CD4-positive, alpha-beta memory T cell (primary cell): ENCODE measurements at regions of chr1 and their contacts with region 1.

Region 1: GRCh38 chr1:212791676-212792395 is at the starts of genes NSL1 and TATDN3:
- DNase-seq: peak; percentile 88 to 94 (median 90)
- H3K4me3 ChIP-seq: peak within 1 kb of the TSS; percentile 96 to 100
- H3K4me3 Mint-ChIP-seq: peak within 1 kb of the TSS; percentile 92 to 99 (median 96)
- H3K27ac ChIP-seq: peak within 1 kb of the TSS; percentile 82
- H3K27ac Mint-ChIP-seq: peak within 1 kb of the TSS; percentile 94 to 98 (median 96)
- H3K4me1 ChIP-seq: peaks cover 48% of the 10 kb centered on the region
- H3K4me1 Mint-ChIP-seq: peaks cover 23 to 50% (median 36%) of the 10 kb centered on the region in 4 donors
- H3K27me3 ChIP-seq: no peaks in the 10 kb centered on the region
- H3K27me3 Mint-ChIP-seq: no peaks in the 10 kb centered on the region
- total RNA-seq, gene NSL1: 38.0 to 38.5 TPM
- total RNA-seq, gene TATDN3: 13.8 to 17.2 TPM

Region 2: GRCh38 chr1:211258756-211259637 is 1532.8 kb before region 1 on chr1 and contains the start of gene RCOR3:
- CTCF ChIA-PET with region 1: no interaction called
- POLR2A ChIA-PET with region 1: interaction called, 4 read pairs
- intact Hi-C with region 1: loop called (anchors 5 kb)
- DNase-seq: peak; percentile 87 to 91 (median 89)
- H3K4me3 ChIP-seq: peak within 1 kb of the TSS; percentile 70 to 75
- H3K4me3 Mint-ChIP-seq: peak within 1 kb of the TSS; percentile 87 to 96 (median 91)
- H3K27ac ChIP-seq: peak within 1 kb of the TSS; percentile 77
- H3K27ac Mint-ChIP-seq: peak within 1 kb of the TSS; percentile 89 to 98 (median 92)
- H3K4me1 ChIP-seq: peaks cover 21% of the 10 kb centered on the region
- H3K4me1 Mint-ChIP-seq: peaks cover 10 to 26% (median 18%) of the 10 kb centered on the region in 4 donors
- H3K27me3 ChIP-seq: no peaks in the 10 kb centered on the region
- H3K27me3 Mint-ChIP-seq: no peaks in the 10 kb centered on the region
- total RNA-seq, gene RCOR3: 69.5 to 74.7 TPM

Region 3: DNA sequence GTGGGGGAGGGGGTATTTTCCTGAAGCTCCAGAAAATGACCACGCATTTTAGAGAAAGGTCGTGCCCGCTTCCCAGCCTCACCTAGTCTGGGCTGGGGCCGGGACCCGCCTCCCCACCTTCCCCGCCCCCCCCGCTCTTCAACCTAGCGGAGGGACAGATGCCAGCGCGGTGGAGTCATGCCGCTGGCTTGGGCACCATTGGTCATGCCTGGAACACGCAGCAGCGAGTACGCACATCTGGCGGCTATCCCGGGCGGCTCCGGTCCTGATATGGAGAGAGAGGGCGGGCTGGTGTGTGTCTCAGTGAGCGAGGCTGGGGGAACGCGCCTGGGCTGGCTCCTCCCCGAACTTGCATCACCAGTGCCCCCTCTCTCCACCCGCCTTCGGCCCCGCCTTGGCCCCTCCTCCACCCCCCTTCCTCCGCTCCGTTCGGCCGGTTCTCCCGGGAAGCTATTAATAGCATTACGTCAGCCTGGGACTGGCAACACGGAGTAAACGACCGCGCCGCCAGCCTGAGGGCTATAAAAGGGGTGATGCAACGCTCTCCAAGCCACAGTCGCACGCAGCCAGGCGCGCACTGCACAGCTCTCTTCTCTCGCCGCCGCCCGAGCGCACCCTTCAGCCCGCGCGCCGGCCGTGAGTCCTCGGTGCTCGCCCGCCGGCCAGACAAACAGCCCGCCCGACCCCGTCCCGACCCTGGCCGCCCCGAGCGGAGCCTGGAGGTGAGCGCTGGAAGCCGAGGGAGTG is 183.5 kb before region 1 on chr1 and contains the start of gene ATF3:
- CTCF ChIA-PET with region 1: no interaction called
- POLR2A ChIA-PET with region 1: no interaction called
- intact Hi-C with region 1: loop called (anchors 5 kb)
- DNase-seq: peak; percentile 60 to 94 (median 64)
- H3K4me3 ChIP-seq: peak within 1 kb of the TSS; percentile 43 to 68
- H3K4me3 Mint-ChIP-seq: peak within 1 kb of the TSS; percentile 95 to 97 (median 97)
- H3K27ac ChIP-seq: peak within 1 kb of the TSS; percentile 48
- H3K27ac Mint-ChIP-seq: peak within 1 kb of the TSS; percentile 68 to 96 (median 93)
- H3K4me1 ChIP-seq: peaks cover 29% of the 10 kb centered on the region
- H3K4me1 Mint-ChIP-seq: peaks cover 12 to 43% (median 23%) of the 10 kb centered on the region in 4 donors
- H3K27me3 ChIP-seq: peaks cover 32% of the 10 kb centered on the region
- H3K27me3 Mint-ChIP-seq: peaks cover 38 to 49% of the 10 kb centered on the region in 2 donors
- total RNA-seq, gene ATF3: 2.7 to 3.1 TPM

Region 4: DNA sequence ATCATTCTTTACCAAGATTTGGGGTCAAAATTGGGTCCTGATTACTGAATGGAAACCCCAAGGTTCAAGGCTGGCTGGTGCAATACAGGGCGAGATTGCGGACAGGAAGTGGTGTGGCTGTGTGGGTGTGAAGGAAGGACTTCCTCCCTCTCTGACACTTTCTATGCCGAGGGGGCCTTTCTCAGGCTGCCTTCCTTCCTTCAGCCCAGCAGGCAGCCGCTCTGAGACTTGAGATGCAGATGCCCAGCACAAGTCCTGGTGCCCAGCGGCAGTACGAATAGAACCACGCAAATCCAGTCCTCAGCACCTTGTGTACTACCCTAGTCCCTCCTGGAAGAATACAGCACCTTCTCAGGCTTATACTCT is 108.5 kb before region 1 on chr1:
- CTCF ChIA-PET with region 1: no interaction called
- POLR2A ChIA-PET with region 1: no interaction called
- intact Hi-C with region 1: no loop called
- DNase-seq: no peak
- H3K4me3 ChIP-seq: no peak overlapping the region
- H3K4me3 Mint-ChIP-seq: peak overlapping the region in 6 of 8 donors; percentile 4 to 66 (median 42)
- H3K27ac ChIP-seq: no peak overlapping the region
- H3K27ac Mint-ChIP-seq: peak overlapping the region in 2 of 7 donors; percentile 35
- H3K4me1 ChIP-seq: peaks cover 25% of the 10 kb centered on the region
- H3K4me1 Mint-ChIP-seq: peaks cover 14 to 37% (median 22%) of the 10 kb centered on the region in 4 donors
- H3K27me3 ChIP-seq: no peaks in the 10 kb centered on the region
- H3K27me3 Mint-ChIP-seq: no peaks in the 10 kb centered on the region

Region 5: GRCh38 chr1:212777151-212777550 is 14.7 kb before region 1 on chr1:
- CTCF ChIA-PET with region 1: interaction called, 8 read pairs
- POLR2A ChIA-PET with region 1: interaction called, 13 read pairs
- intact Hi-C with region 1: no loop called
- DNase-seq: no peak
- H3K4me3 ChIP-seq: no peak overlapping the region
- H3K4me3 Mint-ChIP-seq: no peak overlapping the region
- H3K27ac ChIP-seq: no peak overlapping the region
- H3K27ac Mint-ChIP-seq: peak overlapping the region in 1 of 7 donors; percentile 27
- H3K4me1 ChIP-seq: no peaks in the 10 kb centered on the region
- H3K4me1 Mint-ChIP-seq: peaks cover 6 to 24% (median 13%) of the 10 kb centered on the region in 4 donors
- H3K27me3 ChIP-seq: no peaks in the 10 kb centered on the region
- H3K27me3 Mint-ChIP-seq: no peaks in the 10 kb centered on the region

Region 6: DNA sequence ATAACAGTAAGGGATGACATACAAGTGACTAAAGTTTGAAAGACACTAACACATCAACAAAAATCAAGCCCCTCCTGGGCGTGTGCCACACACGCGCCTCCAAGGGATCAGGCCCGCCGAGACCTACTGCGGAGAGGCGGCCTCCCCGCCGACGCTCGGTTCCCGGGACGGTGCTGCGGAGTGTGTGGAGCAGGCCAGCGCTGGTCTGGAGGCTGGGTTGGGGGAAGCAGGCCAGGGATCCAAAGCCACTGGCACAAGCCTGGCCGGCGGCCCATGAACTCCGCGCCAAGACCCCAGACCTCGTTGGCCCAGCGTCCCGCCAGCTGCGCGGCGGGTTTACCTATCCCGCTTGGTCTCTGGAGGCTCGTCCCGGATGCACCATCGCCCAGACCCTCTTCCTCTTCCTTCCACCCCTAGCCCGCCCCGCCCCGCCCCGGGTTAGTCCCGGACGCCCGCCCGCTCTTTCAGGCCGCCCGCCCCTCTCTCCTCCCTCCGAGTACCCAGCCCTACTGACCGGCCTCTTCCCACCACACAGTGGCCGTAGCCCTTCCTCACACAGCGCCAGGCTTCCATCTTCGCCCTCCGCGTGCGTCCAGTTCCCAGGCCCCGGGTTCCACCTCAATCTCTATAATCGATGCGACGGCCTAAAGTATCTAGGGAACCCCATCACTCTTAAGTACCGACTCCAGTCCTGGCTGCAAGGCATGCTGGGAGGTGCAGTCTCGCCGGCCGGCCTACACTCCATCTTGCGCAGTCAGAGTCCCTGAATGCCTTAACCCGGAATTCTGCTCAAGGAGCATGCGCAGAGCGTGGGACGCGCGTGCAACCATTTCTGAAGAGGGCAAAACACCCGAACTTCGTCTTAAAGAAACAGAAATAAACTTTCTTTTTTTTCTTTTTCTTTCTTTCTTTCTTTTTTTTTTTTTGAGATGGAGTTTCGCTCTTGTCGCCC is 223.5 kb after region 1 on chr1 and contains the start of gene ANGEL2:
- CTCF ChIA-PET with region 1: no interaction called
- POLR2A ChIA-PET with region 1: interaction called, 4 read pairs
- intact Hi-C with region 1: loop called (anchors 1 kb)
- DNase-seq: peak; percentile 92 to 98 (median 96)
- H3K4me3 ChIP-seq: peak within 1 kb of the TSS; percentile 55 to 79
- H3K4me3 Mint-ChIP-seq: peak within 1 kb of the TSS; percentile 96 to 100 (median 100)
- H3K27ac ChIP-seq: peak within 1 kb of the TSS; percentile 85
- H3K27ac Mint-ChIP-seq: peak within 1 kb of the TSS; percentile 98 to 100 (median 100)
- H3K4me1 ChIP-seq: peaks cover 40% of the 10 kb centered on the region
- H3K4me1 Mint-ChIP-seq: peaks cover 27 to 44% (median 34%) of the 10 kb centered on the region in 4 donors
- H3K27me3 ChIP-seq: no peaks in the 10 kb centered on the region
- H3K27me3 Mint-ChIP-seq: no peaks in the 10 kb centered on the region
- total RNA-seq, gene ANGEL2: 79.8 to 81.4 TPM

Region 7: DNA sequence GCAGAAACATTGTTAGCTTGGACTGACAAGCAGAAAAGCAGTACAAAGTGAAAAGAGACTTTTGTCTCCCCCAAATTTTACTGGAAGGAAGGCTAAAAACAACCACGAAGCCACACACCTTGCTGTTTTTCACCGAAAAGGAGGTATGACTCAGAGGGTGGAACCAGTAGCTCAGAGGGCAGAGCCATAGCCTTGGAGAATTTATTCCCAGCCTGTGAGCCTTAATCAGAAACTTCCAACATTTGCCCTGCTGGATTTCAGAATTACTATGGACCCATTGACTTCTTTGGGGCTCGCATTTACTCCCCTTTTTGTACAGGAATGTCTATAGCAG is 291.2 kb after region 1 on chr1:
- CTCF ChIA-PET with region 1: no interaction called
- POLR2A ChIA-PET with region 1: no interaction called
- intact Hi-C with region 1: no loop called
- DNase-seq: no peak
- H3K4me3 ChIP-seq: no peak overlapping the region
- H3K4me3 Mint-ChIP-seq: no peak overlapping the region
- H3K27ac ChIP-seq: no peak overlapping the region
- H3K27ac Mint-ChIP-seq: peak overlapping the region in 2 of 7 donors; percentile 1 to 54
- H3K4me1 ChIP-seq: no peaks in the 10 kb centered on the region
- H3K4me1 Mint-ChIP-seq: peaks cover 0 to 10% (median 4%) of the 10 kb centered on the region in 4 donors
- H3K27me3 ChIP-seq: no peaks in the 10 kb centered on the region
- H3K27me3 Mint-ChIP-seq: no peaks in the 10 kb centered on the region